ENCODE measurements at regions of chr5 and their contacts with region 1.

Region 1: GRCh38 chr5:102450313-102450990 is 48.3 kb downstream of the SLCO6A1 start:
- DNase-seq: peak in 1 of 10 donors; percentile 50
- ATAC-seq: no peak
- H3K4me3 Mint-ChIP-seq: no peak overlapping the region
- H3K27ac Mint-ChIP-seq: no peak overlapping the region
- H3K4me1 Mint-ChIP-seq: peaks cover 0 to 2% (median 0%) of the 10 kb centered on the region in 4 donors
- H3K27me3 Mint-ChIP-seq: peaks cover 0 to 9% (median 2%) of the 10 kb centered on the region in 5 donors

Region 2: DNA sequence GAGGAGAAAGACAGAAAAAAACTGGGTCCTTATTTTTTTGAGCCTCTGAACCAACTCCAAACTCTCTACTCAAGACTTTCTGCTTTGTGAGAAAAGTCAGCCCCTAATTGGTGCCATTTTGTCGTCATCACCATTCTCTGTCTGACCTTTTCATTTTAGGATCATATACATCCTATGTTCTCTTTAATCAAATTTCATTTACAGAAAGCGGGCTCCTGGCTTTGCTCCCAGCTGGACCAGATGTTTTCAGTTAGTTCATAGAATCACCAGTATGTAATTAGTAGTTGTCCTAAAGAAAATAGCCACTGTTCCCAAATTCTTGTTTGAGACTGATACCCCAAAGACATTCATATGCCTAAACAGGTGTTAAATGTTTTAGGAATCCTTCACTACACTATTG is 125.7 kb before region 1 on chr5:
- POLR2A ChIA-PET with region 1: interaction called, 10 read pairs
- DNase-seq: no peak
- ATAC-seq: no peak
- H3K4me3 Mint-ChIP-seq: no peak overlapping the region
- H3K27ac Mint-ChIP-seq: no peak overlapping the region
- H3K4me1 Mint-ChIP-seq: no peaks in the 10 kb centered on the region
- H3K27me3 Mint-ChIP-seq: peaks cover 0 to 17% (median 5%) of the 10 kb centered on the region in 5 donors

Measured in naive thymus-derived CD8-positive, alpha-beta T cell (primary cell).